Activated CD8-positive, alpha-beta T cell treated with anti-CD3 and anti-CD28 coated beads, Interleukin-2, amount 10 ng/mL, durations not matched to agents 7 days and 5 days (primary cell): ENCODE measurements at regions of chr10 and their contacts with region 1.

Region 1: GRCh38 chr10:30639946-30640786 is 10.6 kb upstream of the LYZL2 start:
- DNase-seq: no peak
- ATAC-seq: no peak
- H3K4me3 Mint-ChIP-seq: no peak overlapping the region
- H3K27ac Mint-ChIP-seq: no peak overlapping the region
- H3K4me1 Mint-ChIP-seq: no peaks in the 10 kb centered on the region
- H3K27me3 Mint-ChIP-seq: peaks cover 43% of the 10 kb centered on the region

Region 2: DNA sequence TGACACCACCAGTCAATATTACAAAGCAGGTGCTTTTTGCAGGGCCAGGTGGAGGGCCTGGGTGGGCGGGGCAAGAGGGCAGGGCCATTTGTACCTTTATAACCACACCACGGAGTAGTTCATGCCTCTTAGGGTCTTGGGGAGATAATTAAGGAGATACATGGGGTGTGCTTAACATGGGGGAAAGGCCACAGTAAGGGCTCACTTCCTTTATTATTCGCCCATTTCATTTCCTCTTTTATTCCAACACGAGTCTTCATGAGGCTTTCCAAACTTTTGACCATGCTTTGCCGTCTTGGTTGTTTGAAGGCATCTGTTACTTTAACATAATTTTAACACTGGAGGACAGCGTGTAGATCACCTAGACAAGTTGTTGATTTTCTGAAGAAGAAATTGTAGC is 22.6 kb after region 1 on chr10:
- CTCF ChIA-PET with region 1: interaction called, 21 read pairs
- POLR2A ChIA-PET with region 1: no interaction called
- DNase-seq: no peak
- ATAC-seq: no peak
- H3K4me3 Mint-ChIP-seq: no peak overlapping the region
- H3K27ac Mint-ChIP-seq: no peak overlapping the region
- H3K4me1 Mint-ChIP-seq: no peaks in the 10 kb centered on the region
- H3K27me3 Mint-ChIP-seq: peaks cover 24% of the 10 kb centered on the region

Region 3: GRCh38 chr10:30671026-30671616 is 31.0 kb after region 1 on chr10:
- CTCF ChIA-PET with region 1: interaction called, 29 read pairs
- POLR2A ChIA-PET with region 1: no interaction called
- DNase-seq: peak; percentile 53
- ATAC-seq: peak; percentile 80
- H3K4me3 Mint-ChIP-seq: peak overlapping the region; percentile 44
- H3K27ac Mint-ChIP-seq: no peak overlapping the region
- H3K4me1 Mint-ChIP-seq: peaks cover 5% of the 10 kb centered on the region
- H3K27me3 Mint-ChIP-seq: peaks cover 12% of the 10 kb centered on the region

Region 4: GRCh38 chr10:30792025-30792424 is 151.9 kb after region 1 on chr10:
- CTCF ChIA-PET with region 1: no interaction called
- POLR2A ChIA-PET with region 1: no interaction called
- DNase-seq: no peak
- ATAC-seq: peak; percentile 55
- H3K4me3 Mint-ChIP-seq: peak overlapping the region; percentile 29
- H3K27ac Mint-ChIP-seq: peak overlapping the region; percentile 85
- H3K4me1 Mint-ChIP-seq: peaks cover 23% of the 10 kb centered on the region
- H3K27me3 Mint-ChIP-seq: no peaks in the 10 kb centered on the region